ENCODE measurements at regions of chr6 and their contacts with region 1.

Region 1: DNA sequence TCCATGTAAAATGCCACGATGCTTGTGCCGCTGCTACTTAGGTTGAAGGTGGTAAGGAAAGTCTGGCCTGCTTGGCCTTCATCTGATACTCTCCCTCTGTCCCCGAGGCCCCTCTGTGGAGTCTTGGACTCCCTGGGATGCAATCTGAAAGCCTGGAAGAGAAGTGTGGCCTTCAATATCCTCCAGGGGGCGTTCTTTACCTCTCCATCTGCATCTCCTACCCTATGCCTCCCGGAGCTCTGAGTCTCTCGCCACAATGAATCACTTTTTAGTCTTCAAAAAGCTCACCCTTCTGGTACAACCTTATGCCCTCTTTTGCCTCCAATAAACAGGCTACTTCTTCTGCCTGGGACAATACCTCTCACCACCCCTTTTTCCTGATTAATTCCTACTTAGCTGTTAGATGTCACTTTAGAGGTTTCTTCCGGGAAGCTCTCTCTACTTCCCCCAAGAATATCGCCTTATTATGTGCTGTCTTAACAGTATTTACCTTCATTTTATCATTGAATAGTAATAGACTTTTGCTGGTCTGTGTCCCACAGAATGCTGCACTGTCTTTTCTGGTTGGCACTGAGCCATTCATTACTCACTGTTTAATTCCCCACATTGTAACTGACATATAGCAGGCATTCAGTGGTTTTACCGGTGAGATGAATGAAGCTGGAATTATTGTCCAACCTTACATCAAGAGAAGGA is 13.9 kb upstream of the ATG5 start:
- DNase-seq: no peak

Region 2: DNA sequence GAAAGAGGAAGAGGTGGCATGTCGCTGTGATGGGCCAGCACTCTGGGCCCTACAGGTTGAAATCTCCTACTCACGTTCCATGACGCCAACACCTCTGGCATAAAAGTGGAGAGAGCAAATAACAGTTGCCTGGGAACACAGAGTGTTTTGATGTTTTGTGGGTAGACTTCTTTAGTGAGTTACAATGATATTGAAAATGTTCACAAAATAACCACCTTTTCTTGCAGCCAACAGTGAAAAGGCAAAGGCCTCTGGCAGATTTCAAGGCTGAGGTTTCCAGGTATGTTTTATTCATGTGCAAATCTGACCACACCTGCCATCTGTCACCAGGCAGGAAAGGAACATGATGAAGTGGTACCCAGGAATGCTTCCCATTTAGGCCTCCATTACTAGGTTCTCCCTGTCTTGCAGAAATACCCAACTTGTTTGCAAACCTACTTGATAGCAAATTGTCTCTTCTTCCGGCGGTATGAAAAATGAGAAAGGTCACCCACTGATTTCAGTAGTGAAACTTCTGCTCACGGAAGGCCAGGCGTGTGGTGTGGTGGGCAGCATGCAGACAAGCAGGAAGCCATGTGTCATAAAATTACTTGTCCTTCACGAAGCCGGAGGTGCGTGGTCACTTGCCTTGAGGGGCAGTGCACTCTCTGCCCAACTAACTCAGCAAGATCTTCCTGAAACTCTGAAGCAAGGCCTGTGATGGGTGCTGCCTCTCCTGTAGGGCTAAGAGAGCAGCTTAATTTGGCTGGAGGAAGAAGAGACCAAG is 552.4 kb before region 1 on chr6:
- intact Hi-C with region 1: no loop called
- DNase-seq: no peak

Region 3: GRCh38 chr6:106444777-106445507 is 105.5 kb after region 1 on chr6:
- intact Hi-C with region 1: loop called (anchors 10 kb)
- DNase-seq: no peak

Region 4: DNA sequence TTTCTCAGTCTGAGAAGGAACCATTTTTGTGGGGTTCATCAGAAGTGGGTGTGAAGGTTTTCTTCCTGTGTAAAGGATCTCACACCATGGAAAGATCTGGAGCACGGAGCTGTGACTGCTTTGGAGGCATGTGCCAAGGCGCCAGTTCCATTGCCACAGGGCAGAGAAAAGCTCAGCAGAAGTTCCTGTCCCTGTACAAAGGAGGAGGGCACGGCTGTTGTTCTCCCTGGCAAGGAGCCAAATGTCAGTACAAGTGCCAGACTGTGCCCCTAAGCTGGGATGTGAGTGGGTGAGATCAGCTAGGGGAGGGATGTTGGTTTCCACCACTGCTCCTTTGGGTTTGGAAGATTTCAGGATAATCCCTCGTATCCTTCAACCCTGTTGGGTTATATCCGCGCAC is 138.3 kb after region 1 on chr6:
- intact Hi-C with region 1: no loop called
- DNase-seq: no peak

Region 5: DNA sequence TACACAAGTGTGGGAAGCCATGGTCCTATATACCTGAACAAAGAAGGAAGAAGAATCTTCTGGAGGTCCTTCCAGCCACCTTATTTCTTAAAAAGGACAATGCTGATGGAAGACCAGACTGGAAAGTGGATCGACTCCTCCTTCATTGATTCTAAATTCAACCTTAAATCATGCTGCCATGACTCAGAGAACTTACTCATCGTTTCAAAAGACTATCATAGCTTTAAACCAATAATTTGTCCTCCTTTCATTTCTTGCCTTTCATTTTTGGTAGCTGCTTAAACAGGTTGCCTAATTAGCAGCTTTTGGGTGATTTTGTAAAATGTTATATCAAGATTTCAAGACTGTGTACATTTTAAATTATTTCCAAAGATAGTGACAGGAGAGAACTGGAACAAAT is 229.0 kb after region 1 on chr6:
- intact Hi-C with region 1: loop called (anchors 5 kb)
- DNase-seq: no peak

Region 6: GRCh38 chr6:106979427-106979884 is 640.0 kb after region 1 on chr6:
- intact Hi-C with region 1: loop called (anchors 5 kb)
- DNase-seq: peak; percentile 93

Measured in cardiac septum (tissue), 1 donor.